ENCODE measurements at regions of chr4 and their contacts with region 1.

Region 1: GRCh38 chr4:128809477-128810330 is at the start of gene JADE1:
- DNase-seq: peak; percentile 95
- H3K4me3 ChIP-seq: peak within 1 kb of the TSS; percentile 77 to 98 (median 94)
- H3K27ac ChIP-seq: peak within 1 kb of the TSS; percentile 93
- H3K4me1 ChIP-seq: peaks cover 7% of the 10 kb centered on the region
- H3K27me3 ChIP-seq: no peaks in the 10 kb centered on the region
- CTCF ChIP-seq: peak; percentile 65 to 72
- POLR2A ChIP-seq: no peak
- total RNA-seq, gene JADE1: 39.2 and 45.6 TPM in 2 replicates

Region 2: GRCh38 chr4:128287871-128288688 is 521.6 kb before region 1 on chr4:
- CTCF ChIA-PET with region 1: interaction called, 5 read pairs
- POLR2A ChIA-PET with region 1: no interaction called
- dilution Hi-C with region 1: no loop called
- intact Hi-C with region 1: loop called (anchors 1 kb)
- DNase-seq: peak; percentile 100
- H3K4me3 ChIP-seq: peak overlapping the region; percentile 66 to 84 (median 73)
- H3K27ac ChIP-seq: peak overlapping the region; percentile 83
- H3K4me1 ChIP-seq: peaks cover 23% of the 10 kb centered on the region
- H3K27me3 ChIP-seq: no peaks in the 10 kb centered on the region
- CTCF ChIP-seq: peak in 1 of 2 donors; percentile 26
- POLR2A ChIP-seq: peak; percentile 80

Region 3: GRCh38 chr4:128379860-128380259 is 429.8 kb before region 1 on chr4:
- CTCF ChIA-PET with region 1: interaction called, 6 read pairs
- POLR2A ChIA-PET with region 1: no interaction called
- dilution Hi-C with region 1: no loop called
- intact Hi-C with region 1: loop called (anchors 1 kb)
- DNase-seq: peak; percentile 32
- H3K4me3 ChIP-seq: no peak overlapping the region
- H3K27ac ChIP-seq: no peak overlapping the region
- H3K4me1 ChIP-seq: no peaks in the 10 kb centered on the region
- H3K27me3 ChIP-seq: no peaks in the 10 kb centered on the region
- CTCF ChIP-seq: peak; percentile 55 to 71
- POLR2A ChIP-seq: no peak

Region 4: DNA sequence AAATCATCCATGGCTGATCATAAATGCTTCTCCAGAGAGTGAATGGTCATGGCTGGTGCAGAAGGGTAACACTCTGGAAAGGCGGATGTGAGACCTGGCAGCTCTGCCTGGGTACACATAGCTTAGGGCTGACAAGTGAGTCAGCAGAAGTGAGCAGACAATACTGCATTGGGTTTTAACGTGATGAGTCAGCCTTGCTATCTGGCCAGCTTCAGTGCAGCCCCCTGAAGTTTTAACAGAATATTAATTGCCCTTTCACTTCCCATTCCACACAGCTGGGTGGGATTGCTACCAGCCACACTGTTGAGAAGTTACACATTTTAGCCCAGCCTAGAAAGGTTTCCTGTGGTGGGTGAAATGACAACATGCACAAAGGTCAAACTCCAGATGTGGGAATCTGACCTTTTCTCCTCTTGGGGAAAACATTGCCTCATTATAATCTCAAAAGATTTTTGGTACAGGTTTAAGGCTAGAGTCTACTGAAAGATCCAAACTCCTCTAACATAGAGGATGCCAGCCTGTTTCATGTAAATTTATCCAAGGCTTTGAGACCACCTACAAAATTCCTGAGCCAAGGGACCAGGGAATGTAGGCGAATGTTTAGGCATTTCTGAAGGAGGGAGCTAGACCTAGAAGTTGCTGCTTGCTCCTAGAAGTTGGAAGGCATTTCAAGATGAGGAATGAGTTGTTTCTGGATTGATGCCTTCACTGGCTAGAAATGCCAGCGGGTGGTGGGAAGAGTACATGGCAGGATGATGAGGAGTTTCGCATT is 291.8 kb before region 1 on chr4:
- CTCF ChIA-PET with region 1: interaction called, 3 read pairs
- POLR2A ChIA-PET with region 1: no interaction called
- dilution Hi-C with region 1: no loop called
- intact Hi-C with region 1: loop called (anchors 1 kb)
- DNase-seq: peak; percentile 97
- H3K4me3 ChIP-seq: no peak overlapping the region
- H3K27ac ChIP-seq: peak overlapping the region; percentile 92
- H3K4me1 ChIP-seq: peaks cover 58% of the 10 kb centered on the region
- H3K27me3 ChIP-seq: no peaks in the 10 kb centered on the region
- CTCF ChIP-seq: no peak
- POLR2A ChIP-seq: no peak

Region 5: DNA sequence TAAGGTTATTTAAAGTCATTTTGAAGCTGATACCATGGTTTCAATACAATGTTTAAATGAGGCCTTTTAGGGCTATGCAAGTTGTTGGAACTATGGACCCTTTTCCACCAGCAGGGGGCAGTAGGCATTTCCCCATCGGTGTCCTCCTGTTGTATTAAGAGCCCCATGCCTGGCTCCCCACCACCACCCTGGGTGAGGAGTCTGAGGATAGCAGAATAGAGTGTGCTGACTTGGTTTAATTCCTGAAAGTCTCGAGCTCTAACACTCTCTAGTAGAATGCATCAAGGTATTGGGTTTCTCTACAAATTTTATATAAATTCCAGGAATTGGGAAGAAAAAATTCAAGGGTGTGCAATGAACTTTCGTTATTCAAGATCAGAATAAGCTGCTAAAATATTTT is 235.0 kb before region 1 on chr4:
- CTCF ChIA-PET with region 1: interaction called, 5 read pairs
- POLR2A ChIA-PET with region 1: no interaction called
- dilution Hi-C with region 1: no loop called
- intact Hi-C with region 1: loop called (anchors 1 kb)
- DNase-seq: peak; percentile 49
- H3K4me3 ChIP-seq: no peak overlapping the region
- H3K27ac ChIP-seq: no peak overlapping the region
- H3K4me1 ChIP-seq: peaks cover 38% of the 10 kb centered on the region
- H3K27me3 ChIP-seq: no peaks in the 10 kb centered on the region
- CTCF ChIP-seq: peak; percentile 44 to 59
- POLR2A ChIP-seq: no peak

Region 6: DNA sequence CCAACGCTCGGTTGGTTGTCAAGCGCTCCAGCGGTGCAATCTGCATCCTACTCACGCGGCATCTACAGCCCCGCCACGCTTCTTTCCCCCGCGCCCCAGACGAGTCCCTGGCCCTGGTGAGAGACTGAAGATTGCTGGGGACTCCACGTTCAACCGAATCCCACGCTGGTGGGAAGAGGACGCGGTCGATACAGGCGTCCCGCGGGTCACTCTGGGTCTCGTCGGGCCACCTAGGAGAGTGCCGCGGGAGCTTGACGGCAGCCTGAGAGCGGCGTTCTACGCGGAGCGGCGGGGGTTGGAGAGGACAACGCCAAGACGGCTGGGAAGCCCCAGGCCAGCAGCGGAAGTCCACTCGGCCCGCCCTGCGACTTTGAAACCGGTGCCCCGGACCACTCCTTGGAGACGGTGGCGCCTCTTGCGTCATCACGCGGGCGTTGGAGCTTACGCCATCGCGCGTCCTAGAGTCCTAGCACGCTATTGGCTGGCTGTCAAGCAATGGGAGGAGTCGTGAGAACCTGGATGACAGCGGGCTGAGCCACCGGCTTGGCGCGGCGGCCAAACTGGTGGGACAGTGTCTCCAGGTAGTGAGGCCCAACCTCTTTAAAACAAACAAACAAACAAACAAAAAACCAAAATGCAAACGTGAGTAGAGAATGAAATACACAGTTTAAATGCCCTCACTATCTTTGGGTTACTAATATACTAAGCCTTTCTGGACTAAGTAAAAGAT is 283.7 kb after region 1 on chr4 and contains the start of gene SCLT1:
- CTCF ChIA-PET with region 1: no interaction called
- POLR2A ChIA-PET with region 1: no interaction called
- dilution Hi-C with region 1: no loop called
- intact Hi-C with region 1: loop called (anchors 1 kb)
- DNase-seq: peak; percentile 99
- H3K4me3 ChIP-seq: peak within 1 kb of the TSS; percentile 86 to 97 (median 88)
- H3K27ac ChIP-seq: peak within 1 kb of the TSS; percentile 89
- H3K4me1 ChIP-seq: peaks cover 26% of the 10 kb centered on the region
- H3K27me3 ChIP-seq: no peaks in the 10 kb centered on the region
- CTCF ChIP-seq: no peak
- POLR2A ChIP-seq: peak; percentile 64
- total RNA-seq, gene SCLT1: 14.0 and 16.3 TPM in 2 replicates

Measured in endothelial cell of umbilical vein (primary cell).